Activated naive CD4-positive, alpha-beta T cell treated with anti-CD3 and anti-CD28 coated beads for 36 hours (primary cell): ENCODE measurements at regions of chr7 and their contacts with region 1.

Region 1: GRCh38 chr7:51123322-51124029 is 193.1 kb downstream of the COBL start:
- DNase-seq: peak; percentile 94
- H3K4me3 Mint-ChIP-seq: no peak overlapping the region
- H3K27ac Mint-ChIP-seq: peak overlapping the region; percentile 95
- H3K4me1 Mint-ChIP-seq: peaks cover 36% of the 10 kb centered on the region
- H3K27me3 Mint-ChIP-seq: no peaks in the 10 kb centered on the region

Region 2: DNA sequence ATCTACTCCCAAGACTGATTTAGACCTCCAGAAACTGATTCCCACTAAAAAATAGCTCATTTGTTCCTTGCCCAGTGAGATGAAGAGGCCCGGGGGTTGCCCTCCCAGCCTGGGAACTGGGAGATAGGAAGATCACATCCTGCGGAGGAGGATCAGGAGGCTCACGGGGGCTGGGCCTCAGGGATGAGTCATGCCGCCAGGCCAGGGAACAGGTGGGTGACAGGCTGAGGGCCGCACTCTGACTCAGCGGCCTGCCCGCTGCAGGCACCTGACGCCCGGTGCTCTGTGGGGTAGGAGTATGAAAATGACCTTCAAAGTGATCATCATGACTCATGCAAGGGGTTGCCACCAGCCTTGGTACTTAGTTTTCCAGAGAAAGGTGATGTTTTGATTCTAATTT is 925.9 kb before region 1 on chr7:
- CTCF ChIA-PET with region 1: no interaction called
- intact Hi-C with region 1: loop called (anchors 1 kb)
- DNase-seq: peak; percentile 83
- H3K4me3 Mint-ChIP-seq: no peak overlapping the region
- H3K27ac Mint-ChIP-seq: peak overlapping the region; percentile 52
- H3K4me1 Mint-ChIP-seq: peaks cover 37% of the 10 kb centered on the region
- H3K27me3 Mint-ChIP-seq: no peaks in the 10 kb centered on the region

Region 3: DNA sequence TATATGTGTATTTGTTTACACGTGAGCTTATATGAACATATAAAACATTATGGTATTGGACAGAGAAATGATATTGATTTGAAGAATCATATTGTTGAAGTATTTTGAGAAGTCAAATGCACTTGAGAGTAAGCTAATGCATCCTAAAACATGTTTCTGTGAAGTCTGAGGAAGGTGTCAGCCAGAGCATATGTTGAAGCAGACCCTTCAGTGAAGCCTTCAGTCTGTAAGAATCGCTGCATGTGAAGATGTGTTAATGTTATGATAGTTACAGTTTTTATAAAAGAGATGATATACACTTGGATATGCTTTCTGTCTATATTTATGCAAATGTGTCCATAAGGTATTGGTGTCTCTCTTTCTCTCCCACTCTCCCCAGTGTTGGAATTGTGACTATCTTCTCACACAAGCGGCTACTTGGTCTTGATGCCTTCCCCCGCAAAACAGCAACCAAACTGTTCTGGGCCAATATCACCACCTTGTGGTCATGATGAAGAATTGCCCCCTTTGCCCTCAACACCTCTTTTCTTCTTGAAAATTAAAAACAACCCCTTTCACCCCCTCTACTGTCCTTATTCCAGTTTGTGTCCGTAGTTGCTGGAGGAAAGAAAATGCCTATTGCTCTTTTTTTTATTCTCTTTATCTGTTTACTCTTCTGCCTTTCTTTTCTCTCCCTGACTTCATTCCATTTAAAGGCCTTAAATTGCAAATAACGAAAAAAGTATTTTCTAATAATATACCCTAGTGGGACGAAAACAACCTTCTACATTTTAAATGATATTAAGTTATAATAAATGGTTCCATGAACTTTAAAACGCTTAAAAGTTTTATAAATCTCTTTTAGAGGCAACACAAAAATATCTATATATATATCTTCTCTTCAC is 754.1 kb before region 1 on chr7:
- CTCF ChIA-PET with region 1: no interaction called
- intact Hi-C with region 1: loop called (anchors 1 kb)
- DNase-seq: peak; percentile 67
- H3K4me3 Mint-ChIP-seq: no peak overlapping the region
- H3K27ac Mint-ChIP-seq: peak overlapping the region; percentile 92
- H3K4me1 Mint-ChIP-seq: peaks cover 96% of the 10 kb centered on the region
- H3K27me3 Mint-ChIP-seq: no peaks in the 10 kb centered on the region

Region 4: DNA sequence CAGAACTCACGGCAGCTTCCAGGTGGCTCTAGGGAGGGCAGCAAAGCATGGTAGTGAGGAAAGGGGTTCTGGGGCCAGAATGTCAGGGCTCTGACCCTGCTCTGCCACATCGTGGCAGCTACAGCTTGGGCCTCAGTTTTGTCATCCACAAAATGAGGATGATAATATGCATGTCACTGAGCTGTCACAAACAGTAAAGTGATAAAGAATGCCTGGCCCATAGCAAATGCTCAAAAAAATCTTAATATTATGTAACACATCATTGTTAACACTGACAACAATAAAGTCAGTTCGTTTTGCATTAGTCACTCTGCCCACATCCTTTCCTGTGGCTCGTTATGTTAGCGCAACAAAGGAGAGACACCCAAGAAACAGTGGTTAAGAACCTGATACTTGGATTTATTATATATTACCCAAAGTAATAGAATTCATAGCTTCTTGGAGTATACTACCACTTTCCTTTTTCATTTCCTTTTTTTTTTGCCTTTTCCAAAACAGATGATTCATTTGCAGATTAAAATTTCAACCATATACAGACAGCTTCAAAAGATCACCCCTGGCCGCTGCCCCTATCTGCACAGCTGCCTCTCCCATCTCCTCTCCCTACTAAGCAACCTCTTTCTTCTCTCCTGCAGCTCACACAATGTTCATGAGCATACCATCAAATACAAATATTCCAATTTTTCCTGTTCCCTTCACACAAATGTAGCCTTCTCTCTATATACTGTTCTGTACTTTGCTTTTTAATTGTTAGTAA is 512.8 kb before region 1 on chr7:
- CTCF ChIA-PET with region 1: no interaction called
- intact Hi-C with region 1: loop called (anchors 1 kb)
- DNase-seq: peak; percentile 80
- H3K4me3 Mint-ChIP-seq: no peak overlapping the region
- H3K27ac Mint-ChIP-seq: no peak overlapping the region
- H3K4me1 Mint-ChIP-seq: peaks cover 26% of the 10 kb centered on the region
- H3K27me3 Mint-ChIP-seq: no peaks in the 10 kb centered on the region

Region 5: GRCh38 chr7:50793115-50793946 is 330.1 kb before region 1 on chr7:
- CTCF ChIA-PET with region 1: no interaction called
- intact Hi-C with region 1: loop called (anchors 2 kb)
- DNase-seq: peak; percentile 40
- H3K4me3 Mint-ChIP-seq: peak overlapping the region; percentile 63
- H3K27ac Mint-ChIP-seq: no peak overlapping the region
- H3K4me1 Mint-ChIP-seq: peaks cover 17% of the 10 kb centered on the region
- H3K27me3 Mint-ChIP-seq: peaks cover 26% of the 10 kb centered on the region

Region 6: GRCh38 chr7:50869108-50869725 is 254.3 kb before region 1 on chr7:
- CTCF ChIA-PET with region 1: no interaction called
- intact Hi-C with region 1: no loop called
- DNase-seq: no peak
- H3K4me3 Mint-ChIP-seq: no peak overlapping the region
- H3K27ac Mint-ChIP-seq: no peak overlapping the region
- H3K4me1 Mint-ChIP-seq: no peaks in the 10 kb centered on the region
- H3K27me3 Mint-ChIP-seq: peaks cover 11% of the 10 kb centered on the region

Region 7: GRCh38 chr7:51075681-51076580 is 47.5 kb before region 1 on chr7:
- CTCF ChIA-PET with region 1: interaction called, 6 read pairs
- intact Hi-C with region 1: loop called (anchors 2 kb)
- DNase-seq: no peak
- H3K4me3 Mint-ChIP-seq: no peak overlapping the region
- H3K27ac Mint-ChIP-seq: no peak overlapping the region
- H3K4me1 Mint-ChIP-seq: no peaks in the 10 kb centered on the region
- H3K27me3 Mint-ChIP-seq: no peaks in the 10 kb centered on the region